ENCODE measurements at regions of chr3 and their contacts with region 1.

Region 1: DNA sequence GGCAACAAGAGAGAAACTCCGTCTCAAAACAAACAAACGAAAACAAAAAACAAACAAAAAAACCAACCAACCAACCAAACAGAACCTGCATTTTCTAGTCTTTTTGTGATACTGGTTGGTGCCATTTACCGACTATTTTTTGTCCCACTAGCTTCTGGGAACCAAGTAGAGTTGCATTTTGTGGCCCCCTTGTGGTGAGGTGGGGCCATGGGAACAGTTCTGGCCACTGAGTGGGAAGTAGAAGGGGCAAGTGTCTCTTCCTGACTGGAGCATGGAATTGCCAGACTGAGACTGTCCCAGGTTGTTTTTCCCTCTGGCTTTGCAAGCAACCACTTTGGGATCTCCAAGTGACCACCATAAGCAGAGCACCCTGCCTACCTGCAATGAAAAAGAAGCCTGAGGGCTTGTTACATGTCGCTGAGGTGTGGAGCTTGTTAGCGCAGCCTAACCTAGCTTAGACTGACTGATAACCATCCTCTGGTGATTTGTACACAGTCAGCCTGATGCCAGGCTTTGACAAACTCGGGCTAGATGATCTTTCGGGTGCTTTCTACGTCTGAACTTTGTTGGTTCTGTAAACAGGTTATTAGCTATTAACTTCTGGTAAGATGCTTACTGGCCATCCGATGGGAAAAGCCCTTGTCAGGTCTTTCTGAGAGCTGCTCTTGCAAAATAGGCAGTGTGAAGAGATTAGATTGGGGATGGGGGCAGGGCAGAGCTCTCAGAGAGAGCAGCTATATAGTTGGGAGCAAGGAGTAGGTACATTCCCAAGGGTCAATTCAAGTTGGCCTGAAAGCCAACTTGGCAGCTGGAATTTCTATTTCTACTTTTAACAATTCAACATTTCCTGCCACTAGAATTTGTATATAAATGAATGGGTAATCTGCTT is 172.2 kb downstream of the SSR3 start:
- DNase-seq: no peak
- H3K4me3 ChIP-seq: no peak overlapping the region
- H3K27ac ChIP-seq: peak overlapping the region in 17 of 59 donors; percentile 3 to 53 (median 33)
- H3K27me3 ChIP-seq: no peaks in the 10 kb centered on the region
- CTCF ChIP-seq: peak in 50 of 56 donors; percentile 14 to 63 (median 38)

Region 2: GRCh38 chr3:156174229-156174847 is 208.4 kb before region 1 on chr3:
- intact Hi-C with region 1: loop called in 1 of 2 experiments (anchors 10 kb)
- DNase-seq: peak in 1 of 10 donors; percentile 25
- H3K4me3 ChIP-seq: no peak overlapping the region
- H3K27ac ChIP-seq: no peak overlapping the region
- H3K27me3 ChIP-seq: no peaks in the 10 kb centered on the region
- CTCF ChIP-seq: peak in 53 of 56 donors; percentile 29 to 72 (median 55)

Measured in dorsolateral prefrontal cortex (tissue), 120 donors.